Heart right ventricle (tissue), 16 donors: ENCODE measurements at regions of chr2 and their contacts with region 1.

Region 1: GRCh38 chr2:205078762-205079161 is 533.5 kb downstream of the PARD3B start:
- DNase-seq: no peak
- ATAC-seq: no peak
- H3K4me3 ChIP-seq: no peak overlapping the region
- H3K27ac ChIP-seq: no peak overlapping the region
- H3K4me1 ChIP-seq: no peaks in the 10 kb centered on the region
- H3K27me3 ChIP-seq: no peaks in the 10 kb centered on the region
- CTCF ChIP-seq: no peak

Region 2: DNA sequence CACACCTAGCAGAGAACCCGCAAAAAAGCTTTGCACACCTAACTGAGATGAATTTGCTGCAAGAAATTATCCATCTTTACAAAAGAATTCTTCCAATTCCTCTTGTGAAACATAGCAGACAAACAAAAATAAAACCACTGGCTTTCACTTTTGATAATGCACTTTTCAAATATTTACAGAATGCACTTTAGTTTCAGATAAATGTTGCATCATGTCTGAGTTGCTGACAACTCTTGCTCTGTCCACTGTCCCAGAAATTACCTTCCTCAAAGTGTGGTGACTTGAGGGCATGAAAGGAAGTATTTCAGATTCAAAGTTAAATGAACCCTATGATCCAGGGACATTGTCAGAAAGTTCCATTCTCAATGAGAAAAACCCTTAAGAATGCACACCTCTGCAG is 789.7 kb before region 1 on chr2:
- intact Hi-C with region 1: loop called in 1 of 10 experiments (anchors 2 kb)
- DNase-seq: no peak
- ATAC-seq: no peak
- H3K4me3 ChIP-seq: no peak overlapping the region
- H3K27ac ChIP-seq: no peak overlapping the region
- H3K4me1 ChIP-seq: peaks cover 0 to 8% (median 0%) of the 10 kb centered on the region in 9 donors
- H3K27me3 ChIP-seq: no peaks in the 10 kb centered on the region
- CTCF ChIP-seq: no peak